ENCODE measurements at regions of chr18 and their contacts with region 1.

Region 1: GRCh38 chr18:21851327-21851972 is 110.9 kb downstream of the MIB1 start:
- DNase-seq: no peak
- H3K4me3 ChIP-seq: no peak overlapping the region
- H3K27ac ChIP-seq: no peak overlapping the region
- H3K4me1 ChIP-seq: no peaks in the 10 kb centered on the region
- H3K27me3 ChIP-seq: no peaks in the 10 kb centered on the region
- CTCF ChIP-seq: peak; percentile 18 to 56 (median 43)

Region 2: DNA sequence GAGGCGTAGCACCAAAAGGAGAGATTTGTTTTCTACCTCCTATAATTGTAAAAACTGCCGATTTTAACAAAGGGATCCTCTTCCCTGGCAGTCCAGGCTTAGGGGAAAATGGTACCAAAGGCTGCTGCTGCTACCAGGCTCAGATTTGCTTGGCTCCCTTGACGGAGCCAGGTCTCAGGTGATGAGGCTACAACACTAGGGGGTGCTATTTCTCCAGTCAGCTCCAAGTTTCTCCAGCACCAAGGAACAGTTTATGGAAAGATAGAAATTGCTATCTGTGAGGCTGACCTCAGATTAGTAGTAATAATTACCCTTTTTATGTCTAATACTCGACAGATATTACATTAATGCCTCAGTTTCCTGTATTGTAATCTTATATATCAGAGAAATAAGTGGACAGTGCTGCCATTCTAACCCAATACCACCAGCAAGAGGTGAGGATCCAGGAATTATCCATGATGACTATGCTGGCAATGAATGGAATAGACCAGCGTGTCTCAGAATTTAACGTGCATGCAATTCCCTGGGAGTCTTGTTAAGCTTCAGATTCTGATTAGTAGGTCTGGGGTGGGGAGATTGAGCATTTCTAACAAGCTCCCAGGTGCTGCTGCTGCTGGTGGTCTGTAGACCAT is 362.2 kb before region 1 on chr18:
- intact Hi-C with region 1: loop called (anchors 5 kb)
- DNase-seq: no peak
- H3K4me3 ChIP-seq: no peak overlapping the region
- H3K27ac ChIP-seq: no peak overlapping the region
- H3K4me1 ChIP-seq: no peaks in the 10 kb centered on the region
- H3K27me3 ChIP-seq: no peaks in the 10 kb centered on the region
- CTCF ChIP-seq: peak; percentile 40 to 71 (median 66)

Region 3: GRCh38 chr18:21820035-21820810 is 31.2 kb before region 1 on chr18:
- intact Hi-C with region 1: loop called (anchors 1 kb)
- DNase-seq: no peak
- H3K4me3 ChIP-seq: no peak overlapping the region
- H3K27ac ChIP-seq: no peak overlapping the region
- H3K4me1 ChIP-seq: no peaks in the 10 kb centered on the region
- H3K27me3 ChIP-seq: no peaks in the 10 kb centered on the region
- CTCF ChIP-seq: peak; percentile 26 to 67 (median 57)

Region 4: GRCh38 chr18:21831413-21831831 is 20.0 kb before region 1 on chr18:
- intact Hi-C with region 1: no loop called
- DNase-seq: peak; percentile 26 to 85
- H3K4me3 ChIP-seq: peak overlapping the region; percentile 18 to 55
- H3K27ac ChIP-seq: peak overlapping the region; percentile 67 to 77
- H3K4me1 ChIP-seq: peaks cover 0 to 20% of the 10 kb centered on the region in 2 donors
- H3K27me3 ChIP-seq: no peaks in the 10 kb centered on the region
- CTCF ChIP-seq: no peak

Region 5: GRCh38 chr18:23077493-23078256 is 1226.2 kb after region 1 on chr18:
- intact Hi-C with region 1: no loop called
- DNase-seq: no peak
- H3K4me3 ChIP-seq: no peak overlapping the region
- H3K27ac ChIP-seq: no peak overlapping the region
- H3K4me1 ChIP-seq: peaks cover 0 to 3% of the 10 kb centered on the region in 2 donors
- H3K27me3 ChIP-seq: no peaks in the 10 kb centered on the region
- CTCF ChIP-seq: peak in 1 of 3 experiments; percentile 7

Measured in ascending aorta (tissue), 2 donors.